Right lobe of liver (tissue), 6 donors: ENCODE measurements at regions of chr14 and their contacts with region 1.

Region 1: DNA sequence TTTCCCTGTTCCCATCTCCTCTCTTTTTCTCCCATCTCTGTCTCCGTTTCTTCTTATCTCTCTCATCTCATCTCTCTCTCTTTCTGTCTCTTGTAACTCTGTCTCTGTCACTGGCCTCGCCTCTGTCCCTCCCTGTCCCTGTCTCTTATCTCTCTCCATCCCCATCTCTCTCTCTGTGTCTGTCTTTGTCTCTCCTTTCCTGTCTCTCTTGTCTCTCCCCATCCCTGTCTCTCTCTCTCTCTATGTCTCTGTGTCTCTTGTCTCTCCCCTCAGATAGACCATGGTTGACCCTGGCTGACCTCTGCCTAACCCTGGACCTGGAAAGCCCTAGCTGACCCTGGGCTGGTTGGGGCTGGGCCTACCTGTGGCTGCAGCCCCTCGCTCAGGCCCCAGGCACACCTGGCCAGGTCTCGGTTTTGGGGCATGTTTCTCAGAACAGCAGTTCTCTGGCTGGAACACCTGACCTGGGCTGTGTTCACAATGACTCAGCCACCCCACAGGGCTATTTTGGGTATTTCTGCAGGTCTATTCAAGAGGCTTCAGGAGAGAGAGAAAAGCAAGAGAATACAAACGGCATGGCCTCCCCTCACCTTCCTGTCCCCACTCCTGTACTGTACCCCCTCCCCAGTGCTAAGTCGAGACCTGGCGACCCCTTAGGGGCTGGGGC is 174.4 kb downstream of the TMEM121 start:
- DNase-seq: no peak
- ATAC-seq: peak in 1 of 4 donors; percentile 30
- H3K4me3 ChIP-seq: no peak overlapping the region
- H3K27ac ChIP-seq: no peak overlapping the region
- H3K4me1 ChIP-seq: no peaks in the 10 kb centered on the region
- H3K27me3 ChIP-seq: no peaks in the 10 kb centered on the region
- CTCF ChIP-seq: no peak
- POLR2A ChIP-seq: no peak

Region 2: DNA sequence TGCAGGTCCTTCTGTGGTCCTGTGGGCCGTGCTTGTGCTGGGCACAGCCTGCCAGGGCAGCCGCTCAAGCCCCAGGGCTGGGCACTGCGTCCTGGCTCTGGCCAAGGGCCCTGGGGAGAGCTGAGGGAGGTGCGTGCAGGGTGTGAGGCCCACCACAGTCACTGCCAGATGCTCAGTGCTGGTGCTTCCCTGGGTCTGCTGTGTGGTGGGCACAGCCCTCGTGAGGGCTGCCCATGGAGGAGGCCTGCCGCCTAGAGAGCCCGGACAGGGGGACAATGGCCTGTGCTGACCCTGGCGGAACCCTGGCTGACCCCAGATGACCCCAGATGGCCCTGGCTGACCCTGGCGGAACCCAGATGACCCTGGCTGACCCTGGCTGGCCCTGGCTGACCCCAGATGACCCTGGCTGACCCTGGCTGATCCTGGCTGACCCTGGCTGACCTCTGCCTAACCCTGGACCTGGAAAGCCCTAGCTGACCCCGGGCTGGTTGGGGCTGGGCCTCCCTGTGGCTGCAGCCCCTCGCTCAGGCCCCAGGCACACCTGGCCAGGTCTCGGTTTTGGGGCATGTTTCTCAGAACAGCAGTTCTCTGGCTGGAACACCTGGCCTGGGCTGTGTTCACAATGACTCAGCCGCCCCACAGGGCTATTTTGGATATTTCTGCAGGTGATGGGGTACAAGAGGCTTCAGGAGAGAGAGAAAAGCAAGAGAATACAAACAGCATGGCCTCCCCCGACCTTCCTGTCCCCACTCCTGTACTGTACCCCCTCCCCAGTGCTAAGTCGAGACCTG is 119.0 kb before region 1 on chr14:
- intact Hi-C with region 1: loop called (anchors 5 to 10 kb)
- DNase-seq: peak in 2 of 3 donors; percentile 59 to 86
- ATAC-seq: peak; percentile 49 to 93 (median 70)
- H3K4me3 ChIP-seq: no peak overlapping the region
- H3K27ac ChIP-seq: peak overlapping the region in 1 of 3 donors; percentile 43
- H3K4me1 ChIP-seq: peaks cover 0 to 4% (median 0%) of the 10 kb centered on the region in 4 donors
- H3K27me3 ChIP-seq: no peaks in the 10 kb centered on the region
- CTCF ChIP-seq: no peak
- POLR2A ChIP-seq: no peak

Region 3: DNA sequence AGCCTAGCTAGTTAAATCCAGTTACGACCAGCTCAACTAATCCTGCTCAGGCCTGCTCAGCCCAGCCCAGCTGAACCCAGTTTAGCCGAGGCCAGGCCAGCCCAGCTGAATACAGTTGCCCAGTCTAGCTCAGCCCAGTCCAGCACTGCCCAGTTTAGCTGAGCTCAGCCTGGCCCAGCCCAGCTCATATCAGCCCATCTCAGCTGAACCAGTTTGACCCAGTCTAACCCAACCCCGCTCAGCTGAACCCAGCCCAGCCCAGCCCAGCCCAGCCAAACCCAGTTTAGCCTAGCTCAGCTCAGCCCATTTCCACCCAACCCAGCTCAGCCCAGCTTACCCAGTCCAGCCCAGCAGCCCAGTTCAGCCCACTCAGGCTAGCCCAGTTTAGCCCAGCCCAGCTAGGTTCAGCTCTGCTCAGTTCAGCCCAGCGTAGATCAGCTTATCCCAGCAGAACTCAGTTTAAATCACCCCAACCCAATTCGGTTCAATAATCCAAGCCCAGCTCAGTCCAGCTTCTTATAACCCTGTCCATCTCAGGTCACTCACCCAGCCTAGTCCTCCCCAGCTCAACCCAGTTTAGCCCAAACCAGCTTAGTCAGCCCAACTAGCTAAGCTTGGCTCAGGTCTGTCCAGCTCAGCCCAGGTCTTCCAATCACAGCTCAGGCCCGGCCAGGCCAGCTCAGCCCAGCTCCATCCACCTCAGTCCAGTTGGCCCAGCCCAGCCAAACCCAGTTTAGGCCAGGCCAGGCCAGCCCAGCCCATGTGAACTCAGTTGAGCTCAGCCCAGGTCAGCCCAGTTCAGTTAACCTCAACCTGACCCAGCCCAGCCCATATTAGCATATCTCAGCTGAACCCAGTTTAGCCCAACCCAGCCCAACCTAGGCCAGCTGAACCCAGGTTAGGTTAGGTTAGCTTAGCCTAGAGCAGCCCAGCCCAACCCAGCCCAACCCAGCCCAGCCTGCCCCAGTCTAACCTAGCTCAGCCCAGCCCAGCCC is 97.7 kb before region 1 on chr14:
- intact Hi-C with region 1: no loop called
- DNase-seq: peak; percentile 50 to 92 (median 72)
- ATAC-seq: peak; percentile 47 to 87 (median 64)
- H3K4me3 ChIP-seq: no peak overlapping the region
- H3K27ac ChIP-seq: peak overlapping the region in 1 of 3 donors; percentile 93
- H3K4me1 ChIP-seq: peaks cover 0 to 8% (median 0%) of the 10 kb centered on the region in 4 donors
- H3K27me3 ChIP-seq: no peaks in the 10 kb centered on the region
- CTCF ChIP-seq: no peak
- POLR2A ChIP-seq: no peak